Mammary epithelial cell (primary cell): ENCODE measurements at regions of chr2 and their contacts with region 1.

Region 1: GRCh38 chr2:9799665-9800632 is 43.3 kb upstream of the TAF1B start:
- DNase-seq: peak; percentile 81
- H3K4me3 ChIP-seq: no peak overlapping the region
- H3K27ac ChIP-seq: peak overlapping the region; percentile 93
- H3K4me1 ChIP-seq: peaks cover 54% of the 10 kb centered on the region
- H3K27me3 ChIP-seq: no peaks in the 10 kb centered on the region
- CTCF ChIP-seq: peak; percentile 98 to 100

Region 2: DNA sequence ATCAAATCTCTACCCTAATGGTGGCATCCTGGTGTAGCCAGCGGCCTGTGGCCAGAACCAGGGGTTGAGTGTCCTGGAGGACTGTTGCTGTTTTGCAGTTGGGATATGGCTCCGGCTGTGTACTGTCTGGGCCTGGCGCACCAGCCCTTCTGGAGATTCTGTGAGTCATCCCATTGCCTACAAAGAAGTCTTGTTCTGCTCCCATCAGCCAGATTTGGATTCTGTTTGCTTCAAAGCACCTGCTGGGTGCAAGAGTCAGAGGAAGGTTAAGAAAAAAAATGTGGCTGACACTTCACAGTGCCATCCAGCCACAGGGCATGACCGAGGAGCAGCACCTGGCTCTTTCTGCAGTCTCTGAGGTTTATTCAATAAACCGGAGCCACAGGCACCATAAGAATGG is 634.3 kb before region 1 on chr2:
- CTCF ChIA-PET with region 1: no interaction called
- dilution Hi-C with region 1: no loop called
- in situ Hi-C with region 1: no loop called
- intact Hi-C with region 1: no loop called
- DNase-seq: peak; percentile 89
- H3K4me3 ChIP-seq: no peak overlapping the region
- H3K27ac ChIP-seq: peak overlapping the region; percentile 32
- H3K4me1 ChIP-seq: peaks cover 19% of the 10 kb centered on the region
- H3K27me3 ChIP-seq: no peaks in the 10 kb centered on the region
- CTCF ChIP-seq: no peak

Region 3: DNA sequence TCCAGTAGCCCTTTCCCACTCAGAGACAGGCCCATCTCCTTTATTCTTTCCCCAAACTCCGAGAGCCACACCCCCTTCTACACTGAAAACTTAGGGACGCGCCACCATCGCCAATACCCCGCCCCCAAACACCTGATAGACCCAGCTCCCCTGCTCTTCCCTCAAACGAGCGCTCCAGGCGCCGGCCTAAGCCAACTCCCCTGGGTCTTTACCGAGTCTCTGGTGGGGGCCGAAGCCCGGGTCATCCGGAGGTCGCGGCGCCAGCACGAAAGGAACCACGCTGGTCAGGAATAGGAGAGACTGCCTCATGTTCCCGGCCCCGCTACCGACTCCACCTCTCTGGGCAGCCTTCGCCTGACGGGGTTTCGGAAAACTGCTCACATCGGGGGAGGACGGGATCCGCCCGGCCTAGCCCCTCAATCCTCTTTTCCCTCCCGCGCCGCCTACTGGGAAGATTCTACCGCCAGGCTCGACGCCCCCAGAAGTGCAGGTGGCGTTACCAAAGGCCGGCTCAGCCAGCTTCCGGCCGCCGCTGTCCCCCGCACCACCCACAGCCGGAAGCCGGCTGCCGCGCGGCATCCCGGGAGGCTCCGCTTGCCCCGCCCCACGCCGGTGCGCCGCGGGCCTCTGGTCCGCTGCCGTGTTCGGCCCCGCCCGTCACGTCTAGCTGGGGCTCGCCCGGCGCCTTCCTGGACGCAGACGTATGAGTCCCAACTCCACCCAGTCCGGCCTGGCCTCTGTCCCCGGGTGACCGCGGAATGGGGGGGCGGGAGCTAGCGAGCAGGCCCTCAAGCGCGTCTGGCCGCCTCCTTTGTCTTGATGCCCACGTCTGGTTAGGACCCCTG is 244.4 kb before region 1 on chr2 and contains the start of gene ADAM17:
- CTCF ChIA-PET with region 1: no interaction called
- dilution Hi-C with region 1: no loop called
- in situ Hi-C with region 1: no loop called
- intact Hi-C with region 1: loop called (anchors 1 kb)
- DNase-seq: peak; percentile 98
- H3K4me3 ChIP-seq: peak within 1 kb of the TSS; percentile 60 to 98 (median 94)
- H3K27ac ChIP-seq: peak within 1 kb of the TSS; percentile 89
- H3K4me1 ChIP-seq: peaks cover 31% of the 10 kb centered on the region
- H3K27me3 ChIP-seq: no peaks in the 10 kb centered on the region
- CTCF ChIP-seq: peak; percentile 27 to 47
- total RNA-seq, gene ADAM17: 39.5 to 74.3 TPM

Region 4: DNA sequence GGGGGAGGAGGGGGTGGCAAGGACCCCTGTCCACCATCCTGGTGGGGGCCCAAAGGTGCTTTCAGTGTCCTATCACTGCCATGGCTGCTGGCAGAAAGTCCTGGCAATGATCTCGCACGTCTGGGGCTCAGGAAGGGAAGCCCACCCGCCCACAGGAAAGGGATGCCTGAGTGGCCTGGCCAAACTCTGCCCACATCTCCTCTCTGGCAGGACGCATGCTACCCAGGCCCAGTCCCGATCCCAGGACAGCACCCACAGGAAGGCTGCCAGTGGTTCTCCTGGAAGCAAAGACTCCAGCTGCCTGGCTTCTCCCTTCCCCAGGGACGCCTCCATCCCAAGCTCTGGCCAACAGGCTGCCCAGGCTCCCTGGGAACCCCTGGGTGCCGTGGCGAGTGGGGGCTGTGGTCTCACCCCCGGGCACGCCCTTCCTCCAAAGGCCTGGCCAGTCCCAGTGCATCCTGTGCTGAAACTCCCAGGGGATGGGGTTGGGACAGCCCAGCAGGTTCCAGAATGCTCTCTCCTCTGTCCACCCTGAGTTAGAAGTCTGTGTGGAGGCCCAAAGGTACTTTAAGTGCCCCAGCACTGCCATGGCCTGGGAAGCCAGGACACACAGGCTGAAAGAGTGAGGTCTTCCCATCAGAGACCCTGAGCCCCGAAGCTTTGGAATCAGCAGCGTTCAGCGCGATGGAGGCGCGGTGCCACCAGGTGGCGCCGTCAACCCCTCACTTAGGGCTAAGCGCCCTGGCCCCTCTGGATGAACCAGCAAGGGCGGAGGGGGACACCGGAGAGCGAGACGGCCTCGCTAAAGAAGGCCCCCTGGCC is 13.6 kb after region 1 on chr2:
- CTCF ChIA-PET with region 1: interaction called, 6 read pairs
- dilution Hi-C with region 1: no loop called
- in situ Hi-C with region 1: no loop called
- intact Hi-C with region 1: loop called (anchors 1 kb)
- DNase-seq: peak; percentile 44
- H3K4me3 ChIP-seq: no peak overlapping the region
- H3K27ac ChIP-seq: no peak overlapping the region
- H3K4me1 ChIP-seq: peaks cover 17% of the 10 kb centered on the region
- H3K27me3 ChIP-seq: no peaks in the 10 kb centered on the region
- CTCF ChIP-seq: peak; percentile 95

Region 5: GRCh38 chr2:9897331-9897737 is 97.4 kb after region 1 on chr2:
- CTCF ChIA-PET with region 1: no interaction called
- dilution Hi-C with region 1: no loop called
- in situ Hi-C with region 1: no loop called
- intact Hi-C with region 1: loop called (anchors 1 kb)
- DNase-seq: peak; percentile 99
- H3K4me3 ChIP-seq: peak overlapping the region in 1 of 3 experiments; percentile 2
- H3K27ac ChIP-seq: peak overlapping the region; percentile 97
- H3K4me1 ChIP-seq: peaks cover 36% of the 10 kb centered on the region
- H3K27me3 ChIP-seq: no peaks in the 10 kb centered on the region
- CTCF ChIP-seq: no peak

Region 6: DNA sequence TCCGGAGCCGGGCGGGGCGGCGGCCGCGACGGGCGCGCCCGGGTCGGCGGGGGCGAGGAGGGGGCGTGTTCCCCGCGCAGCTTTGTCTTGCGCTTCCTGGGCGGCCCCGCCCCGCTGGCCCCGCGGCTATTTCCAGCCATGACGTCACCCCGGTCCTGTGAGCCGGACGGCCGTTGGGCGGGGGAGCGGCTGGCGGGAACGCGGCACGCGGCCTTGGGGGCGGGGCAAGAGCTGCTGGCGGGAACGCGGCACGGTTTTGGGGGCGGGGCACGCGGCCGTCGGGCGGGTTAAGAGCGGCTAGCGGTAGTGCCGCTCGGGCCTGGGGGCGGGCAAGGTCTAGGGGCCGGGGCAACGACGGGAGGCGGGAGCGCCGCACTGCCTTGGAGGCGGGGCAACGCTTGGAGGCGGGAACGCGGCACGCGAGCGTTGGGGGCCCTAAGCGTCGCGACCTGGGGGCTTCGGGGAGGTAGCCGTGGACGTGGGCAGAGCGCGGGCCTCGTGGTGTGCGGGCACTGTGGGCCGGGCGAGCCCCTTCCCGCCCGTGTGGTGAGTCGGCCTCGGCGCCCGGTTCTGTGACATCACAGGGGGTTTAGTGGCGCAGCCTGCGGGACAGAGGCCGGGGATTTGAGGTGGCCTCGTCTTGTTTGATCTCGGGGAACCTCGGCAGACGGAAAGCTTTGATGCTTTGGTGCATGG is 244.1 kb after region 1 on chr2:
- CTCF ChIA-PET with region 1: interaction called, 3 read pairs
- dilution Hi-C with region 1: no loop called
- in situ Hi-C with region 1: loop called in 1 of 2 experiments (anchors 5 kb)
- intact Hi-C with region 1: loop called (anchors 1 kb)
- DNase-seq: peak; percentile 88
- H3K4me3 ChIP-seq: peak overlapping the region; percentile 27 to 72 (median 67)
- H3K27ac ChIP-seq: peak overlapping the region; percentile 19
- H3K4me1 ChIP-seq: peaks cover 4% of the 10 kb centered on the region
- H3K27me3 ChIP-seq: no peaks in the 10 kb centered on the region
- CTCF ChIP-seq: no peak

Region 7: GRCh38 chr2:10267551-10268465 is 467.9 kb after region 1 on chr2:
- CTCF ChIA-PET with region 1: no interaction called
- dilution Hi-C with region 1: no loop called
- in situ Hi-C with region 1: no loop called
- intact Hi-C with region 1: no loop called
- DNase-seq: no peak
- H3K4me3 ChIP-seq: no peak overlapping the region
- H3K27ac ChIP-seq: no peak overlapping the region
- H3K4me1 ChIP-seq: peaks cover 9% of the 10 kb centered on the region
- H3K27me3 ChIP-seq: no peaks in the 10 kb centered on the region
- CTCF ChIP-seq: no peak

Region 8: DNA sequence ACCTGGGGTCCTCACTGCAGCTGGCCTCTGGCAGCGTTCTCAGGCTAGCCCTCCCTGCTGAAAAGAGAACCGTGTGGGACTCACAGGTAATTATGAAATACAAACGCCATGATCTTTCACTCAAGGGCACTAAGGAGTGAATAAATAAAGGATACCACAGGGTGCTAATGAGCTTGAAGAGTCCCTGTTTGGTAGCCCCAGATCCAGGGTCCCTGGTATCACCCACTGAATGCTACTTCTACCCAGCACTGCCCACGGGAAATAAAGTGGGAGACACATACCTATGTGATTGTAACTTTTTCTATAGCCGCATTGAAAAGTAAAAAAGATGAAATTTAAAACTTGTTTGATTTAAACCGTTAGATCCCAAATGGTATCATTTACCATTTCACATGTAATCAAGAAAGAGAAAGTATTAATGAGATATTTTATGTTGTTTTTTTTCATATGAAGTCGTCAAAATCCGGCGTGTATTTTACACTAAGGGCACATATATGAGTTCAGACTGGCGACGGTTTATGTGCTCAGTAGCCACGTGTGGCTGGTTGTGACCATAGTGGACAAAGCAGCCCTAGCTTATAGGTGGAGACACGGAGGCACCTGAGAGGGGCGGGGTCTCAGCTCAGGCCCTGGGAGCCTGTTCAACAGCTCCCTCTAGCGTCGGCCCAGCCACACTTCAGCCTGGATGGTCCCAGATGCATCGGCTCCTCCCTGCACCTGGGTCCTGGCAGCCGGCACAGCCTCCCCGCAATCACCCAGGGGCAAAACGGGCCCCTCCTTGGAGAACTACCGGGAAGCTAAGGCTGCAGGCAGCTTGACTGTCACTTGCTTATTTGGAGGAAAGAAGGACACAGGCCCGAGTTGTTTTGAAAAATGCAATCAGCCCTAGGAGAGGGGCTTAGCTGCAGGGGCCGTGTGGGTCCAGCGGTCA is 609.0 kb after region 1 on chr2:
- CTCF ChIA-PET with region 1: no interaction called
- dilution Hi-C with region 1: no loop called
- in situ Hi-C with region 1: loop called in 1 of 2 experiments (anchors 25 kb)
- intact Hi-C with region 1: loop called (anchors 2 kb)
- DNase-seq: peak; percentile 73
- H3K4me3 ChIP-seq: no peak overlapping the region
- H3K27ac ChIP-seq: peak overlapping the region; percentile 98
- H3K4me1 ChIP-seq: peaks cover 74% of the 10 kb centered on the region
- H3K27me3 ChIP-seq: no peaks in the 10 kb centered on the region
- CTCF ChIP-seq: peak; percentile 79 to 99